ENCODE measurements at regions of chr12 and their contacts with region 1.

Region 1: GRCh38 chr12:116497051-116497591 is 62.1 kb upstream of the MAP1LC3B2 start:
- DNase-seq: no peak
- H3K4me3 ChIP-seq: no peak overlapping the region
- H3K27ac ChIP-seq: no peak overlapping the region
- H3K4me1 ChIP-seq: no peaks in the 10 kb centered on the region
- H3K27me3 ChIP-seq: no peaks in the 10 kb centered on the region
- CTCF ChIP-seq: no peak

Region 2: DNA sequence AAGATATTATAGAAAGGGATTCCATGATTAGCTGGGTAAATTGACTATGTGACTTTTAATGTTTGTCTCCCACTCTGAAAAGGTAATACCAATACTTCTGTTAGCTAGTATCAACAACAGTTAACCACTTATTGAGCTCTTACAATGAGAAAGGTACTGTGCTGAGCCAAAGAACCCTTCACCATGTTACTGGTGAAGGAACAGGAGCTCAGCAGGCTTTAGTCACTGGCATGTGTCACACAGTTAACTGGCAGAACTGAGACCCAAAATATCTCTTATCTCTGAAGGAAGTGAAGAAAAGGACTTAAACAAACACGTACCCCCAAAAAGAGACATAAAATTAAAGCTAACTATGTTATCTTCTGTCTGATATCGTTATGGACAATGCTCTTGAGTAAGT is 390.3 kb before region 1 on chr12:
- CTCF ChIA-PET with region 1: no interaction called
- POLR2A ChIA-PET with region 1: no interaction called
- intact Hi-C with region 1: no loop called
- DNase-seq: no peak
- H3K4me3 ChIP-seq: no peak overlapping the region
- H3K27ac ChIP-seq: no peak overlapping the region
- H3K4me1 ChIP-seq: peaks cover 18% of the 10 kb centered on the region
- H3K27me3 ChIP-seq: no peaks in the 10 kb centered on the region
- CTCF ChIP-seq: no peak

Region 3: DNA sequence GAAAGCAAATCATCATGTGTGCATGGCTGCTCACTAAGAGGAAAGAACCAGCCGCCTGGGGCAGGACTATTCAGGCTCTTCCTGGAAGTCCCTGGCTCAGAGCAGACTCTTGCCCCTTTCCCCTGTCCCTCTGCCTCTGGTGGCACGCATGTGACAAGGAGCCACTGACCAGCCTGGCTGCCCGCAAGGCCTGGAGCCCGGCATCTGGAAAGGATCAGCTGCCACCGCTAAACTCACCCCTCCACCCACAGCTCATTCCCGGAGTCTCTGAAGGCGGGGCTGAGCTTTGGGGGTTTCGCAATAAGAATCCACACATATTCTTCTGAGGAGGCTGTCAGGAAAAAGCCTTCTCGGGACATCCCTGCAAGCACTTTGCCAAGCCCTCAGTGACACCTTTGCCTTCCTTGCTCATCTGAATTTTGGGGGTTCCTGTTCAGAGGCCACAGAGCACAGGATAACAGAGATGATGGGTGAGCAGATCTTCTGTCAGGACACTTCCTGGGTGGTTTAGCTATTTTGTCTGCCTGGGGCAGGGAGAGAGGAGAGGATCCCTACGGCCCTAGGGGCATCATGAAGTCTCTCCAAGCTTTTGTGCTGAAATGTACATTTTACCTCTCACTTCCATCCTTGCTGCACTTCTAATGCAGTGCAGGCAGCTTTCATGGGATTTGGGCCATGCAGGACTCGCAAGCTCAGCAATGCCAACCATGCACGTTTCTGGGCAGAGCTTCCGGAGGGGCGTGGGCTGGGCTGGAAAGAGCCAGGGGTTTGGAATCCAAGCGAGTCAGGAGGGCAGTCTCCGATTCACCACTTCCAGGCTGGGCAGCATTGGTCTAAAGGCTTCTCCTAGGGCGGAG is 62.7 kb before region 1 on chr12:
- CTCF ChIA-PET with region 1: no interaction called
- POLR2A ChIA-PET with region 1: interaction called, 14 read pairs
- intact Hi-C with region 1: no loop called
- DNase-seq: peak; percentile 88
- H3K4me3 ChIP-seq: peak overlapping the region; percentile 29
- H3K27ac ChIP-seq: peak overlapping the region; percentile 31
- H3K4me1 ChIP-seq: peaks cover 11% of the 10 kb centered on the region
- H3K27me3 ChIP-seq: no peaks in the 10 kb centered on the region
- CTCF ChIP-seq: no peak